Mammary epithelial cell (primary cell): ENCODE measurements at regions of chr16 and their contacts with region 1.

Region 1: DNA sequence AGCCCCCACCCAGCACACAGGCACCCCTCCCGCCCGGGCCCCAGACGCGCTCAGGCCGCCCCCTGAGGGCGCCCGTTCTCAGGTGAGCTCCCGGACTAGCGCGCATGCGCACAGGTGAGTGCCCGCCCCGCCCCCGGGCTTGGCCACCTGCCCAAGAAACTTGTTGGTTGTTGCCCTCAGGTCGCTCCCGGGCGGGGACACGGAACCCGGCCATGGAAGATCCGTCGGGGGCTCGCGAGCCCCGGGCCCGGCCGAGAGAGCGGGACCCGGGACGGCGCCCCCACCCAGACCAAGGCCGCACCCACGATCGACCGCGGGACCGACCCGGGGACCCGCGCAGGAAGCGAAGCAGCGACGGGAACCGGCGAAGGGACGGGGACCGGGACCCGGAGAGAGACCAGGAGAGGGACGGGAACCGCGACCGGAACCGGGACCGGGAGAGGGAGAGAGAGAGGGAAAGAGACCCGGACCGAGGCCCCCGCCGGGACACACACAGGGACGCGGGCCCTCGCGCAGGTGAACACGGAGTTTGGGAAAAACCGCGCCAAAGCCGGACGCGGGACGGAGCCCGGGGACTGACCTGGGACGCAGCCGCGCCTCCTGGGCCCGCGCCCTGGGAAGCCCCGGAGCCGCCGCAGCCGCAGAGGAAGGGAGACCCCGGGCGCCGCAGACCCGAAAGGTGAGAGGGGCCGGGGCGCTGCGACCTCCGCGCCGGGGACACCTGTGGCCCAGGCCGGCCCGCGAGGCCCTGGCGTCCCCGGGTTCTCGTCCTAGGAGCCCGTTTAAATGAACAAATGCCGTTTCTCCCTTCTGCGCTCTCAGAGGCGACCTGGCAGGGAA is at the start of gene MARVELD3:
- DNase-seq: peak; percentile 71
- H3K4me3 ChIP-seq: peak within 1 kb of the TSS; percentile 92 to 98 (median 98)
- H3K27ac ChIP-seq: peak within 1 kb of the TSS; percentile 49
- H3K4me1 ChIP-seq: peaks cover 5% of the 10 kb centered on the region
- H3K27me3 ChIP-seq: no peaks in the 10 kb centered on the region
- CTCF ChIP-seq: no peak
- total RNA-seq, gene MARVELD3: 7.3 to 13.2 TPM

Region 2: GRCh38 chr16:71645453-71645852 is 19.2 kb after region 1 on chr16:
- CTCF ChIA-PET with region 1: no interaction called
- dilution Hi-C with region 1: no loop called
- in situ Hi-C with region 1: no loop called
- intact Hi-C with region 1: loop called (anchors 1 kb)
- DNase-seq: peak; percentile 12
- H3K4me3 ChIP-seq: no peak overlapping the region
- H3K27ac ChIP-seq: no peak overlapping the region
- H3K4me1 ChIP-seq: no peaks in the 10 kb centered on the region
- H3K27me3 ChIP-seq: no peaks in the 10 kb centered on the region
- CTCF ChIP-seq: peak; percentile 48 to 60

Region 3: GRCh38 chr16:71663788-71664187 is 37.5 kb after region 1 on chr16:
- CTCF ChIA-PET with region 1: no interaction called
- dilution Hi-C with region 1: loop called (anchors 5 kb)
- in situ Hi-C with region 1: no loop called
- intact Hi-C with region 1: no loop called
- DNase-seq: no peak
- H3K4me3 ChIP-seq: no peak overlapping the region
- H3K27ac ChIP-seq: no peak overlapping the region
- H3K4me1 ChIP-seq: no peaks in the 10 kb centered on the region
- H3K27me3 ChIP-seq: no peaks in the 10 kb centered on the region
- CTCF ChIP-seq: no peak